Body of pancreas (tissue), 4 donors: ENCODE measurements at regions of chr11 and their contacts with region 1.

Region 1: DNA sequence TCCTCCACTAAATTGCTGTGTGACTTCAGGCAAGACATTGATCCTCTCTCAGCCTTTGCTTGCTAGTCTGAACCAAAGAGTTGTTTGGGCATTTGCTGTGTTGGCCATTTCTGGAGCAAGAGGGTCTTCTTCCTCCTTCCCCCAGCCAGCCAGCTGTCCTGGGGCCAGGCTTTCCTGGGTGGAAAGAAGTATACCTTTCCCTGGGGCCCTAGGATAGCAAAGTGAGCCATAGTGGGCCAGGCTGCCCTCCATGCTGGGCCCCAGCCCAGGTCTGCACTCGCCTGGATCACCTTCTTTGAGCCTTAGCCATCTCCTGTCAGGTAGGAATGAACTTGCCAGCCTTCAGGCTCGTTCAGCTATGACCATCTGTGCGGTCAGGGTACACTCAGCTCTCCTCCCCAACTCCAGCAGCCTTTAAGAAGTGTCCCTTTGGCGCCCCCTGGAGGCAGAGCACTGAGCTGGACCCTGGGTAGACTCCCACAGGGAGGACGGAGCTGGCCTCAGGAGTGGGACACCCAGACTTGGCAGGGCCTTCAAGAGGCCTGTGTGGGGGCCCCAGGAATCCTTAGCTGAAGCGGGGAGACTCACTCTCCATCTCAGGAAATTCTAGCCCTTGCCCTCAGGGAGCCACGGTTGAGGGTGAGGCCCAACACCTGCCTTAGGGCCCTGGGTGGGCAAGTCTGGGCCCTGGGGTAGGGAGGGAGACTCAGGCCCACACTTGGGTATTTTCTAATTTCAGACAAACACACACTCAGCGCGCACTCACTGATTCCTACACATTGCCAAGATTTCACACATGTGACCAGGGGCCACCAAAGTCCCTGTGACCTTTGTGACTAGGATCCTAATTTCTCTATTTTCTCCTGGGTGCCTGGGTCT is 35.6 kb upstream of the TPBGL start:
- DNase-seq: peak; percentile 92 to 96 (median 93)
- ATAC-seq: peak; percentile 91
- H3K4me3 ChIP-seq: no peak overlapping the region
- H3K27ac ChIP-seq: no peak overlapping the region
- H3K4me1 ChIP-seq: peaks cover 14% of the 10 kb centered on the region
- H3K27me3 ChIP-seq: no peaks in the 10 kb centered on the region
- CTCF ChIP-seq: peak; percentile 80 to 91 (median 88)
- POLR2A ChIP-seq: no peak

Region 2: GRCh38 chr11:75142714-75143419 is 62.1 kb before region 1 on chr11:
- intact Hi-C with region 1: loop called (anchors 5 kb)
- DNase-seq: peak in 3 of 4 donors; percentile 41 to 77 (median 44)
- ATAC-seq: no peak
- H3K4me3 ChIP-seq: no peak overlapping the region
- H3K27ac ChIP-seq: peak overlapping the region in 1 of 4 donors; percentile 36
- H3K4me1 ChIP-seq: no peaks in the 10 kb centered on the region
- H3K27me3 ChIP-seq: no peaks in the 10 kb centered on the region
- CTCF ChIP-seq: no peak
- POLR2A ChIP-seq: no peak

Region 3: DNA sequence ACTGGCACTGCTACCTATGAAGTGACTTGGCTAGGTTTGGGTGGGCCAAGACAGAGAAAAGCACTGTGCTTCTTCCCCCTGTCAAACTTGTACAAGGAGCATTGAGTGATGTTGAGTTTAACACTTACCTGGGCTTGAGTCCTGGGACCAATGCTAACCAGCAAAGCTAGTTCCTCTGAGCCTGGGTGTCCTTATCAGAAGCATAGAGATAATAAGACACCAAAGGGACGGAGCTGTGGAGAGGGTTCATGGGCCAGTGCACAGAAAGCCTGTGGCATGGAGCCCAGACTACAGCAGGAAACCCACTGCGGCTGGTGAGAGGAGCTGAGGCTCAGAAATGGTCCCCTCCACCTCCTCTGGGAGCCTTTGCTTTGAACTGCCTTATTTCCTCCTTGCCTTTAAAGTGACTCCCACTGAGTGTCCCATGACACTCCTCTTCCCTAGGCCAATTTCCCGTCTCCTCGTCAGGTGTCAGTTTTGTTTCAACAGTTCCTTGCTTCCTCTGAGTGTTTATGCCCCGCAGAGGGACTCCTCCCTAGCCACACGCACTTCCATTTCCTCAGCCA is 44.6 kb before region 1 on chr11:
- intact Hi-C with region 1: loop called (anchors 5 kb)
- DNase-seq: peak in 2 of 4 donors; percentile 30 to 59
- ATAC-seq: peak; percentile 17
- H3K4me3 ChIP-seq: no peak overlapping the region
- H3K27ac ChIP-seq: peak overlapping the region; percentile 66 to 80 (median 74)
- H3K4me1 ChIP-seq: peaks cover 70% of the 10 kb centered on the region
- H3K27me3 ChIP-seq: no peaks in the 10 kb centered on the region
- CTCF ChIP-seq: no peak
- POLR2A ChIP-seq: no peak